ENCODE measurements at regions of chr3 and their contacts with region 1.

Region 1: GRCh38 chr3:126679318-126679751 is 24.4 kb upstream of the TXNRD3 start:
- DNase-seq: peak; percentile 75 to 90 (median 85)
- H3K4me3 ChIP-seq: no peak overlapping the region
- H3K27ac ChIP-seq: no peak overlapping the region
- H3K4me1 ChIP-seq: no peaks in the 10 kb centered on the region
- H3K27me3 ChIP-seq: no peaks in the 10 kb centered on the region
- CTCF ChIP-seq: peak; percentile 86 to 90 (median 87)
- EP300 ChIP-seq: no peak
- POLR2A ChIP-seq: no peak

Region 2: GRCh38 chr3:126746395-126747177 is 67.3 kb after region 1 on chr3:
- intact Hi-C with region 1: loop called in 1 of 4 experiments (anchors 10 kb)
- DNase-seq: peak in 3 of 5 donors; percentile 26 to 54 (median 42)
- H3K4me3 ChIP-seq: no peak overlapping the region
- H3K27ac ChIP-seq: peak overlapping the region in 1 of 2 donors; percentile 45
- H3K4me1 ChIP-seq: peaks cover 1% of the 10 kb centered on the region
- H3K27me3 ChIP-seq: no peaks in the 10 kb centered on the region
- CTCF ChIP-seq: peak in 1 of 3 donors; percentile 7
- EP300 ChIP-seq: no peak
- POLR2A ChIP-seq: no peak

Region 3: DNA sequence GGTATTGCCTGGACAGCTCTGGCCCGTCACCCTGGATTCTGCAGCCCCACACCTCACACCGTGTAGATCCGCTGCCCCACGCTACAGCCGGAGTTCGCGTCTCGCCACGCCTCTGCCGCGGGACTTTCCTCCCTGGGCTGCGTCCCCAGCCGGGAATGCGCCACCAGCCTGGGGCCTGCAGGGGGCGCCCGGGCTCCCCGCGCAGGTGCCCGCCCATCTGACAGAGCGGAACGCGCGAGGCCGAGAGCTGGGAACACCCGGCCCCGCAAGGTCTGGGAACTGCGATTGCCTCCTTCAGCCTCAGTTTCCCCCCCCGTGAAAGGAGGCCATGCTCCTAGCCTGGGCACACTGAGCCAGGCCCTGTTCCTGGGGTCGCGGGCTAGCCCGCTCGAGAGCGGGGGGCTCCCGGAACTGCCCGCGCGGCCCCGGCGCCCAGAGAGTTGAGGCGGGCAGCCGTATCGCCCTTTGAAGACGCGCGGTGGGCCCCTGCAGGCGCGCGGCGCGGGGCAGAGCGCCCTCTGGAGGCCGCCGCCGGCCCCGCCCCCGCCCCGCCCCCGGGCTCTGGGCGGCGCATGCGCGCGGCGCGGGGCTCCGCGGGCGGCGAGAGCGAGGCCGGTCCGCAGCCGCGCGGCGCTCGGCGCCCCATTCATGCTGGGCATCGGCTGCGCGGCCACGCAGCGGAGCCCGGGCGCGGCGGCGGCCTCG is 303.3 kb after region 1 on chr3 and contains the start of gene PLXNA1:
- intact Hi-C with region 1: loop called in 3 of 4 experiments (anchors 5 to 10 kb)
- DNase-seq: peak; percentile 61 to 83 (median 73)
- H3K4me3 ChIP-seq: peak within 1 kb of the TSS; percentile 81
- H3K27ac ChIP-seq: peak within 1 kb of the TSS; percentile 0 to 5
- H3K4me1 ChIP-seq: peaks cover 15% of the 10 kb centered on the region
- H3K27me3 ChIP-seq: no peaks in the 10 kb centered on the region
- CTCF ChIP-seq: peak; percentile 45 to 88 (median 70)
- EP300 ChIP-seq: no peak
- POLR2A ChIP-seq: no peak
- total RNA-seq, gene PLXNA1: 13.8 to 47.2 (median 27.6) TPM

Region 4: GRCh38 chr3:127535901-127536829 is 856.8 kb after region 1 on chr3:
- intact Hi-C with region 1: loop called in 2 of 4 experiments (anchors 10 kb)
- DNase-seq: no peak
- H3K4me3 ChIP-seq: no peak overlapping the region
- H3K27ac ChIP-seq: no peak overlapping the region
- H3K4me1 ChIP-seq: no peaks in the 10 kb centered on the region
- H3K27me3 ChIP-seq: no peaks in the 10 kb centered on the region
- CTCF ChIP-seq: no peak
- EP300 ChIP-seq: no peak
- POLR2A ChIP-seq: no peak

Region 5: DNA sequence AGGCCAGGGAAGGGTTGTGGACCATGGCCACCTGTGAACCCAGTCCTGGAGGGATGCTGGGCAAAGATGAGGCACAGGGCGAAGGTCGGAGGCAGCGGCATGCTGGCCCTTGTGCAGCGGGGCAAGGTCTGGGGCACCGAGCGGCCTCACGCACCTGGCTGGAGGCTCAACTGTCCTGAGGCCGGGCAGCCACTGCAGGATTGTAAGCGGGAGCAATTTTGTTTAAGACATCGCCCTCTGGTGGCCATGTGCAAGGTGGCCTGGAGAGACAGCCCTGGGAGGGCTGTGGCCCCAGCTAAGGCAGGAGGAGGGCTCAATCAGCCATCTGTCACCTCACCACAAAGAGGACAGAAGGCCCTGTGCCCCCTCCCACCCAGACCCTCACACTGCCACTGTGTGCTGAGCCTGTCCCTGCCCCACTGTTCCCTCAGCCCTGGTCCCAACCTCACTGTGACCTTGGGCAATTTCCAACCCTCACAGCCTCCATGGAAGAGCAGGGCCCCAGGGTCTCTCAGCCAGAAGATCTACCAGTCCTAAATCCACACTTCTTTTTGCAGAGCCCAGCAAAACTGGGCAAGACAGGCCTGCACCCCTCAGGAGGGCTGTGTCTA is 865.0 kb after region 1 on chr3:
- intact Hi-C with region 1: loop called in 3 of 4 experiments (anchors 5 to 10 kb)
- DNase-seq: peak; percentile 60 to 76 (median 67)
- H3K4me3 ChIP-seq: no peak overlapping the region
- H3K27ac ChIP-seq: no peak overlapping the region
- H3K4me1 ChIP-seq: peaks cover 4% of the 10 kb centered on the region
- H3K27me3 ChIP-seq: no peaks in the 10 kb centered on the region
- CTCF ChIP-seq: peak in 1 of 3 donors; percentile 47
- EP300 ChIP-seq: no peak
- POLR2A ChIP-seq: no peak

Measured in ovary (tissue), 10 donors.